Dorsolateral prefrontal cortex (tissue), 120 donors: ENCODE measurements at regions of chr22 and their contacts with region 1.

Region 1: DNA sequence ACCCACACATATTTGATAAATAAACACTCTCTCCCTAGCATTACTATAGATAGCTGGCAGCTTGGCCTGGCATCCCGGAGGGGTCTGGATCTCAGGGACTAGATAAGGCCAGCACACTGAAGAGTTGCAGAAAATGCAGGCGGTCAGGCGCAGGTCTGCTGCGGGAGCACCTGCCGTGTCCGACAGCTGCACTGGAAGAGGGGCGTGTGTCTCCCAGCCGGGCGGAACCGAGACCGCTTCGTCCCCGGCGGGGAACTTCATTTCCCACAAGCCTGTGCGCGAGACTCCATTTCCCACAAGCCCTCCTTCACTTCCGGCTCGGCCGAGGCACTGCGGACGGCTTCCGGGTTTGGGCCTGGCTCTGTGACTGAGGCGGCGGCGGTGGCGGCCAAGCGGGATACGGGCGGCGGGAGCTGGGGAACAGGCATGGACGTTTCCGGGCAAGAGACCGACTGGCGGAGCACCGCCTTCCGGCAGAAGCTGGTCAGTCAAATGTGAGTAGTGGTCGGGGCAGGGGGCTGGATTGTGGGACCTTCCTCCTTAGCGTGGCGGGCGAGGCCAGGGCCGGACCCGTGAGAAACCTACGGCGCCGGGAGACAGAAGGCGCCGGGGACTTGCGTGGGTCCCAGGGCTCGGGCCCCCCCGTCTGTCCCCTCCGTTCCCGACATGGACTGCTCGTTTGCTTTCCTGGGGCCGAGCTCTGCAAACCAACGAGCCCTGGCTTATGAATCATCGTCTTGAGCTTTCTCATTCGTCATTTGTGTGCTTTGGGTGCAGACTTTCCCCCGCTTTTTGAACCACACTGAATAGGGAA is at the start of gene MED15:
- DNase-seq: peak; percentile 85 to 94 (median 90)
- H3K4me3 ChIP-seq: peak within 1 kb of the TSS; percentile 50 to 98 (median 88)
- H3K27ac ChIP-seq: peak within 1 kb of the TSS; percentile 65 to 98 (median 88)
- H3K27me3 ChIP-seq: no peaks in the 10 kb centered on the region
- CTCF ChIP-seq: peak in 35 of 56 donors; percentile 10 to 59 (median 37)
- total RNA-seq, gene MED15: 83.5 to 133 (median 106) TPM

Region 2: DNA sequence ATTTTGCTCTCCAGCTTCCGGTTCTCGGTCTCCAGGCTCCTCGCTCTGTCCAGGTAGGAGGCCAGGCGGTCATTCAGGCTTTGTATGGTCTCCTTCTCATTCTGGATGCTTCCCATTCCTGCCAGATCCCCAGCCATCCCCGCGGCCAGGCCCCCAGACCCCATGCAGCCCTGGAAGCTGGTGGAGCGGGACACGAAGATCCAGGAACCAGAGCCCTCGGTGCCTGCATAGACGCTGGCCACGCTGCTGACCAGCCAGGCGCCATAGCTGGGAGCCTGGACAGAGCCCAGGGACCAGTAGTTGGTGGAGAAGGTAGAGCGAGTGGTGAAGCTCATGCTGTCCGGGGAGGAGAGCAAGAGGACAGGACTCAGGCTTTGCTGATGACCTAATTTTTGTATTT is 23.7 kb before region 1 on chr22:
- intact Hi-C with region 1: no loop called
- DNase-seq: no peak
- H3K4me3 ChIP-seq: no peak overlapping the region
- H3K27ac ChIP-seq: no peak overlapping the region
- H3K27me3 ChIP-seq: no peaks in the 10 kb centered on the region
- CTCF ChIP-seq: no peak

Region 3: DNA sequence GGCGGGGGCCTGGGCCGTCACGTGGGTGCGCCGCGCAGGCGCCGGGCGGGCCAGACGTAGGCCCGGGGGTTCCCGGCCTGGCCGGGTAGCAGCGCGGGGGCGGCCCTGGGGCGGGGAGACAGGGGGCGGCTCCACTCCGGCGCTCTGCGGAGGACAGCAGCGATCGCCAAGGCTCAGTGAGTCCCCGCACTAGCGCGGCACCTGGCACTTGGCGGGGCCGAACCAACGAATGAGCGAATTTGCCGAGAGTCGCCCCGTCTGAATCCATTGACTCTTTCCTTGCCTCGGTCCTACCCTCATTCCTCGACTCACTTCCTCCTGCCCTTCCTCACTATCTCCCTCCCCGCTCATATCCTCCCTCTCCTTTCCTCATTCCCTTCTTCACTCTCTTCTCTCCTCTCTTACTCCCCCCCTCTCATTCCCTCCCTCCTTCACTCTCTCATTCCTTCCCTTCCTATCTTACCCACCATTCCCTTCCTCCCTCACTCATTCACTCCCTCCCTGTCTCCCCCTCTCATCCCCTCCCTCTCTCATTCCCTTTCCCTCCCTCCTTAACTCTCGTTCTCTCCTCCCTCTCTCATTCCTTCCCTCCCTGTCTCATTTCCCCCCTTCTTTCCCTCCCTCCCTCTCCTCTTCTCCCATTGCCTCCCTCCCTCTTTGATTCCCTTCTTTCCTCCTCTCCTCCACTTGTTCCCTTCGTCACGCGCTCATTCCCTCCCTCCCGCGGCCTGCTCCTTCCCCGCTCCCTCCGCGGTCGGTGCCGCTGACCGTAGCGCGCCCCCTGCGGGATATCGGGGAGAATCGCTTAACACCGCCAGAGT is 11.4 kb before region 1 on chr22:
- intact Hi-C with region 1: loop called (anchors 1 kb)
- DNase-seq: peak; percentile 77 to 97 (median 90)
- H3K4me3 ChIP-seq: peak overlapping the region; percentile 62 to 93 (median 83)
- H3K27ac ChIP-seq: peak overlapping the region; percentile 84 to 99 (median 97)
- H3K27me3 ChIP-seq: no peaks in the 10 kb centered on the region
- CTCF ChIP-seq: peak; percentile 69 to 95 (median 87)

Region 4: DNA sequence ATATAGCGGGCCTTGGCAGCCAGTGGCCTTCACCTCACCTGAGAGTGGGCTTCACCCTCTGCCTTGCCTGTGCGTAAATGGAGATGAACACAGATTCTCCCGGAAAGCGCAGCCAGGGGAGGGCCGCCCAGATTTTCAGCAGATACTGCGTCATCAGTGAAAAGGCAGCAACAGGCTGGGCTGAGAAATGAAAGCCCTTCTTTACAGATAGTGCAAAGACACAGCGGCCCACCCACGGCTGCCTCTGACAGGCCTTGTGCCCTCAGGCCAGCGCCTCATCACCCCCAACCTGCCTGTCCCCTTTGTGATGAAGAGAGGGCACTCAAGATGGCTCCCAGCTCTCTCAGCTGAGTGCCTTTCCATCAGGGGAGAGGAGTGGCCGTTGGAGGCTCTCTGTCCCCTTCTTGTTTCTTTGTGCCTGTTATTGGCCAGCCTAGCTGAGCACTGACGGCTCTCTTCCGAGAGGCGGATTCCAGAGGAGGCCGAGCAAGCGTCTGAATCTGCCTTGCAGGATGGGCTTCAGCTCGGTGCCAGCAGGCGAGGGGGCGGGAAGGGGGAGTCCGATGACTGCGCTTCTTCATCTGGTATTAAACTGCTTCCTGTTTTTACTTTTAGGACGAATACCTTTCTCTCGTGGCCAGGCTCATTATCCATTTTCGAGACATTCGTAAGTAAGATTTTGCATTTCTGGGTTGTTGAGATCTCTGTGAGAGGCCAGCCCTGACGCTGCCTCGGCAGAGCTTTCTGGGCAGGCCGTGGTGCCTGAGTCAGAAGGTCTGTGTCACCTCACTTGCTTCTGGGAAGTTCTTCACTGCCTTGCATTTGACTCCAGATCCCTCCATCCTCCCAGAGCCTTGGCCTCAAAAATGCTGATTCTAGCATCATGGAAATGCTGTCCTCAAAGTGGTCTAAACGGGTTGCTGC is 43.6 kb after region 1 on chr22:
- intact Hi-C with region 1: loop called (anchors 5 kb)
- DNase-seq: peak in 7 of 10 donors; percentile 35 to 83 (median 70)
- H3K4me3 ChIP-seq: peak overlapping the region in 44 of 59 donors; percentile 4 to 51 (median 24)
- H3K27ac ChIP-seq: peak overlapping the region; percentile 85 to 99 (median 97)
- H3K27me3 ChIP-seq: no peaks in the 10 kb centered on the region
- CTCF ChIP-seq: peak in 4 of 56 donors; percentile 5 to 23 (median 15)

Region 5: GRCh38 chr22:20568989-20569769 is 61.7 kb after region 1 on chr22:
- intact Hi-C with region 1: loop called in 1 of 2 experiments (anchors 5 kb)
- DNase-seq: peak in 7 of 10 donors; percentile 65 to 84 (median 77)
- H3K4me3 ChIP-seq: no peak overlapping the region
- H3K27ac ChIP-seq: peak overlapping the region in 32 of 59 donors; percentile 1 to 74 (median 36)
- H3K27me3 ChIP-seq: no peaks in the 10 kb centered on the region
- CTCF ChIP-seq: no peak